SK-N-SH (cell line): ENCODE measurements at regions of chr6 and their contacts with region 1.

Region 1: GRCh38 chr6:46848684-46849360 is 55.6 kb downstream of the MEP1A start:
- DNase-seq: peak; percentile 79
- H3K4me3 ChIP-seq: peak overlapping the region; percentile 9 to 35; a peak in 2 of 4 replicates
- H3K27ac ChIP-seq: no peak overlapping the region
- H3K4me1 ChIP-seq: no peaks in the 10 kb centered on the region
- H3K27me3 ChIP-seq: peaks cover 10% of the 10 kb centered on the region; the same call in 1 of the 2 replicates
- CTCF ChIP-seq: peak; percentile 83
- EP300 ChIP-seq: no peak
- RAD21 ChIP-seq: peak; percentile 79

Region 2: GRCh38 chr6:46815130-46815529 is 33.7 kb before region 1 on chr6:
- CTCF ChIA-PET with region 1: no interaction called
- POLR2A ChIA-PET with region 1: no interaction called
- DNase-seq: no peak
- H3K4me3 ChIP-seq: no peak overlapping the region
- H3K27ac ChIP-seq: no peak overlapping the region
- H3K4me1 ChIP-seq: no peaks in the 10 kb centered on the region
- H3K27me3 ChIP-seq: no peaks in the 10 kb centered on the region
- CTCF ChIP-seq: no peak
- EP300 ChIP-seq: no peak
- RAD21 ChIP-seq: no peak

Region 3: DNA sequence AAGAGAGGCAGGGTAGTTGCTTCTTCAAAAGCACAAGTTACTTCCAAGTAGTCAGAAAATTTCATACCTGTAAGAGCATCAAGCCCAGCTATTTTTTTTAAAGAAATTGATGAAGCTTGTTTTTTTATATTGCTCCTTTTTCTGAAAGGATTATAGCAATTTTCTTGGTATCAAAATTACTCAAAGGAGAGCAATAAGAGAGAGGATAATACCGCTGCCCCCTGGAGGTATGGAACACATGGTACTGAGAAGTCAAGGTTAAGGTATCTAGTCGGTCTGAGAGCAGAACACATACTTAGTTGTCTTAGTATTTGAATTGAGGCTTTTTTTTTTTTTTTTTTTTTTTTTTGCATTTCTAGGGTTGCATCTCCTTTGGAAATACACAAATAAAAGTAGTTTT is 13.6 kb after region 1 on chr6:
- CTCF ChIA-PET with region 1: interaction called, 17 read pairs
- POLR2A ChIA-PET with region 1: no interaction called
- DNase-seq: no peak
- H3K4me3 ChIP-seq: no peak overlapping the region
- H3K27ac ChIP-seq: no peak overlapping the region
- H3K4me1 ChIP-seq: no peaks in the 10 kb centered on the region
- H3K27me3 ChIP-seq: peaks cover 21% of the 10 kb centered on the region; the same call in 1 of the 2 replicates
- CTCF ChIP-seq: no peak
- EP300 ChIP-seq: no peak
- RAD21 ChIP-seq: no peak

Region 4: GRCh38 chr6:46989384-46989783 is 140.6 kb after region 1 on chr6:
- CTCF ChIA-PET with region 1: interaction called, 11 read pairs
- POLR2A ChIA-PET with region 1: no interaction called
- DNase-seq: no peak
- H3K4me3 ChIP-seq: no peak overlapping the region
- H3K27ac ChIP-seq: no peak overlapping the region
- H3K4me1 ChIP-seq: no peaks in the 10 kb centered on the region
- H3K27me3 ChIP-seq: peaks cover 14% of the 10 kb centered on the region; the same call in 1 of the 2 replicates
- CTCF ChIP-seq: no peak
- EP300 ChIP-seq: no peak
- RAD21 ChIP-seq: no peak

Region 5: GRCh38 chr6:47042275-47042791 is 193.5 kb after region 1 on chr6 and contains the start of gene ADGRF1:
- CTCF ChIA-PET with region 1: interaction called, 47 read pairs
- POLR2A ChIA-PET with region 1: no interaction called
- DNase-seq: no peak
- H3K4me3 ChIP-seq: no peak within 1 kb of the TSS
- H3K27ac ChIP-seq: no peak within 1 kb of the TSS
- H3K4me1 ChIP-seq: peaks cover 0 to under 1% of the 10 kb centered on the region in 2 experiments; a peak in 1 of 4 replicates
- H3K27me3 ChIP-seq: peaks cover 13% of the 10 kb centered on the region; the same call in 1 of the 2 replicates
- CTCF ChIP-seq: no peak
- EP300 ChIP-seq: no peak
- RAD21 ChIP-seq: no peak
- polyA plus RNA-seq, gene ADGRF1: not detected in 2 replicates

Region 6: GRCh38 chr6:47047479-47048407 is 198.9 kb after region 1 on chr6:
- CTCF ChIA-PET with region 1: interaction called, 47 read pairs
- POLR2A ChIA-PET with region 1: no interaction called
- DNase-seq: peak; percentile 33
- H3K4me3 ChIP-seq: no peak overlapping the region; a peak in 1 of 4 replicates
- H3K27ac ChIP-seq: no peak overlapping the region
- H3K4me1 ChIP-seq: peaks cover 0 to 2% of the 10 kb centered on the region in 2 experiments; a peak in 2 of 4 replicates
- H3K27me3 ChIP-seq: peaks cover 5% of the 10 kb centered on the region; the same call in 1 of the 2 replicates
- CTCF ChIP-seq: peak; percentile 79
- EP300 ChIP-seq: no peak
- RAD21 ChIP-seq: peak; percentile 79